Right ventricle myocardium inferior (tissue), 1 donor: ENCODE measurements at regions of chr2 and their contacts with region 1.

Region 1: DNA sequence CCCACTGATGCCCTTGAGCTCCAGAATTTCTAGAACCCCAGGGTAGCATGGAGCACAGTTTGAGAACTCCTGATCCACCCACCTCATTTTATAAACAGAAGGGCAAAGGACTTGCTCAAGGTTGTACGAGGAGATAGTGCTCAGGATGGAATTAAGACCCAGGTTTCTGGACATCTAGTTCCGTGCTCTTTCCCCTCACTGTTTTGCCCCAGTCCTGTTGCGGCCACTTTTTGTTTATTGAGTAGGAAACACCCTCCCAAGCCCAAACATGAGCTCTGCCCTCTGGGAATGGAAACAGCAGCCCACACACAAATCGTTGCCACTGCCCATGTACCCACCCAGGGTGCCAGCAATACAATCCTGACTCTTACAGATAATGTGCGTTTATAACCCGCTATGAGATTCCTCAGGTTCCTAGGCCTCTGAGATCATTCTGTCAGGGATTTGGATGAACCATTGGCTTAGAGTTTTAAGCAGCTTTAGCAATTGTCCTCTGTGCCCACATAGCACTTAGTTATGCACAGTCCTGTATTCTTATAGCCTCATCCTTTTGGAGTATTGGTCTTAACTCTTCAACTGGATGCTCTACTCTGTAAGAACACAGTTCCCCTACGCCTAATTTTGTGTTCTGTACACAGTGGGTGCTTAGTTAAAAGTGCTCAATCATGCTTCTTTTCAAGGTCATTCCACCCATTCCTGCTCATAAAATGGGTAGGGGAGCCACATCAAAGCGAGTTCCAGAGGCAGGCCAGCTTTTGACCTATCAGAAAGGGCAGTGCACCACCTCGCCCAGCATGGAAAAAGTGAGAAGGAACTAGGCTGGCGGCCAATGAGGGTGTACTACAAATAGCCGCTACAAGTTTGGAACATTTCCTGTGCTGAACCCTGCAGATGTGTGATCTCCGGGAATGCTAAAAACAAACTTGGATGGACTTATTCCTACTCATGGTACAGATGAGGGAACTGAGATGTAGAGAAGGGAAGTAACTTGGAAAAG is 60.3 kb upstream of the IGFBP2 start:
- DNase-seq: peak; percentile 87
- ATAC-seq: peak; percentile 95

Region 2: DNA sequence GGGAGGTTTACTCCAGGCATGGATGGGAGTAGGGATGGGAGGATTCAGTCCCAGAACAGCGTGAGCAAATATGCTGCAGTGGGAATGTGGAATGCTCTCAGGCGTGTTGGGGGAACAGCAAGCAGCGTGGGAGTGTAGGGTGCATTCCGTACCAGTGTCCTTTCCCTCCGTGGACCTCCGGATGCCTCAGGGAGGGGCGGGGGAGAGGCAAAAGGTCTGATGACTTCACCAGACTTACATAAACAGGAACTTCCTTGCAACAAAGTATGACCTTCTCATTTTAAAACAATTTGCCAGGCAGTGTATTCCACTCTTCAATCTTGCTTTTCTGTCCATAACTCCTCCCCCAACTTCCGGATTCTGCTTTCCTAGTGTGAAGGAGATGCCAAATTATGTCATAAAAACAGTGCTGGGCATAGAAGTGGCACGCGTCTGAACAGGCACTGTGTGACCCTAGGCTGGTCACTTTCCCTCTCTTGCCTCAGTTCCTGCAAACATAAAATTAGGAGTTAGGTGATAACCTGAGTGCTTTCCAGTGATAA is 37.4 kb before region 1 on chr2:
- intact Hi-C with region 1: loop called (anchors 1 kb)
- DNase-seq: peak; percentile 75
- ATAC-seq: peak; percentile 80

Region 3: DNA sequence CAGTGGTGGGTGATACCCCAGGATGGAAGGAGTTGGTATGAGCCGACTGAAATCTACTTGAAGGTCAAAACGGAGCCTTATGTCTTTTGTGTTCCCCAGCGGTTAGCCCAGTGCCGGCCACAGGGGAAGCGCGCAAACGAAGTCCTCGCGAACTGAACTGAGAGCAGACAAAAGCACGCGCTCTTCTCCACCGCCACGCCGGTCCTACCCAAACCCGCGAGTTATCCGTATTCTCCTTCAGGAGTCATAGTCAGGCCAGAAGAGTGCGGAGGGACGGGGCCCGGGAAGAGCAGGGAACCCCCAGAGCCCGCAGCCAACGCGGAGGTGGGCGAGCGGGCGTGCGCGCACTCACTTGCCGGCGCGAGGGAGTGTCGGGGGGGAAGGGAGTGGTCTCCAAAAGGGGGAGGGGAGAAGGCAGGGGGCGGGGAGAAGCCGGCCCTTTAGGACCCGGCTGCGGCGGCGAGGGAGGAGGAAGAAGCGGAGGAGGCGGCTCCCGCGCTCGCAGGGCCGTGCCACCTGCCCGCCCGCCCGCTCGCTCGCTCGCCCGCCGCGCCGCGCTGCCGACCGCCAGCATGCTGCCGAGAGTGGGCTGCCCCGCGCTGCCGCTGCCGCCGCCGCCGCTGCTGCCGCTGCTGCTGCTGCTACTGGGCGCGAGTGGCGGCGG is 60.2 kb after region 1 on chr2 and contains the start of gene IGFBP2:
- intact Hi-C with region 1: loop called (anchors 10 kb)
- DNase-seq: no peak
- ATAC-seq: peak; percentile 32
- total RNA-seq, gene IGFBP2: 60.1 TPM

Region 4: GRCh38 chr2:216698895-216699294 is 126.0 kb after region 1 on chr2:
- intact Hi-C with region 1: no loop called
- DNase-seq: peak; percentile 65
- ATAC-seq: peak; percentile 41